Motor neuron (in vitro differentiated cells): ENCODE measurements at regions of chr6 and their contacts with region 1.

Region 1: DNA sequence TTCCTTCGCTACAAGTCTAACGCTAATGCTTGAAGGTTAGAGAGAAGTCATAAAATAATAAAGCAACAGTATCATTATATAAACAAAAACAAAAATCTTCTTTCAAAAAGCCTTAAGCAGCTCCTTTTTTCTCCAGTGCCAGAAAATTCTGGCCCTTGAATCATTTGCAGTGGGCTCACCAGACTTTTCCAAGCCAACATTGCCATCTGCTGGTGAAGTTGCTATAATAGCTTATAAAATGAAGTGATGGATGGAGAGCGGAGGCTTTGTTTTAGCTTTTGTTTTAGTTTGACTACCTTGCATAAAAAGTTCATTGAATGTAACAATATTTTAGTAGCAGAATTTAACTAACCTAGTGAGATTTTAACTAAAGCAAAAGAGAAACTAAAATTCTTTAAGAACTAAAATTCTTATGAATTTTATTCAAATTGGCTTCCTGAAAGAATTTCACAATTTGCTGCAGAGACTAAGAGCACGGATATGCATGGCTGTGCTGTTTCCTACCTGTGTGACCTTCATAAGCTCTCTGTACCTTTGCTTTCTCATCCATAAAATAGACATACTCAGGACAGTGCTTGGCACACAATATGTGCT is 44.8 kb upstream of the SLC2A12 start:
- ATAC-seq: peak in 7 of 8 experiments; percentile 36 to 72 (median 53)
- H3K4me3 ChIP-seq: no peak overlapping the region
- H3K27ac ChIP-seq: no peak overlapping the region
- H3K4me1 ChIP-seq: peaks cover 0 to 4% of the 10 kb centered on the region in 2 donors

Region 2: DNA sequence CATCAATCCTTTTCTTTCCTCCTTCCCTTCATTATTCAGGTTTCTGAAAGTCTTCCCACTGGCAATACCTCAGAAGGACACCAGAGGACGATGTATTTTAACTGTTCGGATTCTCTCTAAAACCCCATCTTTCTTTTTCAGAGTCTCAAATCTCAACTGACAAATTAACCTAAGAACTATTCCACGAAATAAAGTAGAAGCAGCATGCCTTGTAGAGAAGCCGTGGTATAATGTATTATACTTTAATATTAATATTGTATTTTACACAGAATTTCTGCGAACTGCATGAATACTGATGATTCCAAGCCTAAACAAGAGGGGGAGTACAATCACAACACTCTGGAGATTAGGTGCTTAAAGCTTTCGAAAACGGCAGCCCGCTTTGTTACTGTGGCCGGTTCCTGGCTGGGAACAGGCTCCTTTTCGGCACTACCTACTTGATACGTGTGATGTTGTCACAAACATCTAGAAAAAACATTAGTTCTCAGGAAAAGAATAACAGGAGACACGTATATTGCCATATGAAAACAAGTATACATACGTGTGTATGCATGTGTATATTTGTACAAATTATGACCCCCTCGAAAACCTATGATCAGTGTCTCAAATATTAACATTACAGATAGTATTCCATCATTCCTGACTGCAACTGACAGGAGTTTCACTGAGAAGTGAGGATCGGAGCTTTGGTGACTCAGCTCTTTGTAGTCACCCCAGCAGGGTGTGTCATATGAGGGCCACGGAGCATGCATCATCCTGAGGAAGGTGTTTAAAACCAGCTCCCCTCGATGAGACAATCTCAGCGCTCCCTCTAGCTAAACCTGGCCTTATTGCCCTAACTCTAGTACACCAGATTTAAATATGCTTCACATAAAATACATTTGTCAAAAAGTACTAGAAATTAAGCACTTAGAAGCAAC is 528.0 kb before region 1 on chr6:
- in situ Hi-C with region 1: loop called in 5 of 9 experiments (anchors 25 kb)
- ATAC-seq: peak; percentile 92 to 99 (median 98)
- H3K4me3 ChIP-seq: peak overlapping the region; percentile 27 to 41 (median 33)
- H3K27ac ChIP-seq: no peak overlapping the region
- H3K4me1 ChIP-seq: peaks cover 0 to 2% of the 10 kb centered on the region in 2 donors

Region 3: GRCh38 chr6:133871131-133871530 is 226.1 kb before region 1 on chr6:
- in situ Hi-C with region 1: no loop called
- ATAC-seq: no peak
- H3K4me3 ChIP-seq: no peak overlapping the region
- H3K27ac ChIP-seq: no peak overlapping the region
- H3K4me1 ChIP-seq: no peaks in the 10 kb centered on the region

Region 4: GRCh38 chr6:133916650-133917151 is 180.5 kb before region 1 on chr6:
- in situ Hi-C with region 1: loop called in 7 of 9 experiments (anchors 10 to 25 kb)
- ATAC-seq: peak; percentile 86 to 97 (median 95)
- H3K4me3 ChIP-seq: no peak overlapping the region
- H3K27ac ChIP-seq: no peak overlapping the region
- H3K4me1 ChIP-seq: peaks cover 4 to 6% of the 10 kb centered on the region in 2 donors

Region 5: GRCh38 chr6:133923938-133924593 is 173.1 kb before region 1 on chr6:
- in situ Hi-C with region 1: loop called in 8 of 9 experiments (anchors 10 to 25 kb)
- ATAC-seq: peak; percentile 93 to 98 (median 96)
- H3K4me3 ChIP-seq: no peak overlapping the region
- H3K27ac ChIP-seq: no peak overlapping the region
- H3K4me1 ChIP-seq: no peaks in the 10 kb centered on the region

Region 6: DNA sequence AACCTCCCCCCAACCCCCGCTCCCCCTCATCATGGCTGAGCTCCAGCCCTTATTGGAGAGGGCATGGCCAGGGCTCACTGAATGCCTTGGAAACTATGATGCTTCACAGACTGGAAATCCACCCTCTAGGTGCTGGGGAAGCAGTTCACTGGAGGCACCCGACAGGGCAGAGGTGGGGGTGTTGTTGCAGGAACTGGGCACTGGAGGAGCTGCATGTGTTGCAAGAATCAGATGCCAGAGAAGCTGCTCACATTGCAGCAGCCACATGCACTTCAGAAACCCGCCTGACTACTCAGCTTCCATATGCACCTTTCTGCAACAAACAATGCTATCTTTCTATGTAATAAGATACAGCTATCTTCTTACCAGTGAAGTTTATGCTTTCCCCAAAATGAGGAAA is 152.1 kb before region 1 on chr6:
- in situ Hi-C with region 1: loop called in 1 of 9 experiments (anchors 25 kb)
- ATAC-seq: peak in 1 of 8 experiments; percentile 22
- H3K4me3 ChIP-seq: no peak overlapping the region
- H3K27ac ChIP-seq: no peak overlapping the region
- H3K4me1 ChIP-seq: no peaks in the 10 kb centered on the region

Region 7: DNA sequence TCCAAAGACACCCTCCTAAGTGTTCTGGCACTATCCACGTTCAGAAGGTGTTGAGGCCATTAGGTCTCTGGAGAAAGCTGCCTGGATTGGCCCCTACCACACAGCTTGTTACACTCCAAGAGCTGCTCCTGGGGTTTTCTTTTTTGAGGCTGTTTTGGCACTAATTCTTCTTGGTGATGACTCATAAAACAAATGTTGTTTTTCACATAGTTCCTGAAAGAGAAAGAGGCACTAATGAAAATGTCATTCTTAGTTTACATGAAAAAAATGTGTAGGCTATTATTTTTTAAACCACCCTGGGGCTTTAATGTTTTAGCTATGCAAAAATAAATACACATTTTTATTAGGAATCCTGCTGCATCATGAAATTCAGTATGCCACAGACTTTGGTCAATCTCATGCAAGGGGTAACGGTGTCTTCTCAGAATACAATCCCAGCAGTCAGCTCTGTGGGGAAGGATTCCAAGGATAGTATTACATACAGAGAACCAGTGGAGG is 106.1 kb before region 1 on chr6:
- in situ Hi-C with region 1: no loop called
- ATAC-seq: peak in 3 of 8 experiments; percentile 21 to 28 (median 24)
- H3K4me3 ChIP-seq: no peak overlapping the region
- H3K27ac ChIP-seq: no peak overlapping the region
- H3K4me1 ChIP-seq: no peaks in the 10 kb centered on the region